Activated CD4-positive, alpha-beta memory T cell treated with anti-CD3 and anti-CD28 coated beads, Interleukin-2, amount 10 ng/mL, durations not matched to agents 7 days and 5 days (primary cell): ENCODE measurements at regions of chr6 and their contacts with region 1.

Region 1: GRCh38 chr6:30616811-30617564 is at the start of gene PPP1R10:
- DNase-seq: peak; percentile 99
- H3K4me3 Mint-ChIP-seq: peak within 1 kb of the TSS; percentile 91
- H3K27ac Mint-ChIP-seq: peak within 1 kb of the TSS; percentile 96
- H3K4me1 Mint-ChIP-seq: peaks cover 45% of the 10 kb centered on the region
- H3K27me3 Mint-ChIP-seq: no peaks in the 10 kb centered on the region
- total RNA-seq, gene PPP1R10: 96.1 to 103 TPM

Region 2: GRCh38 chr6:30212865-30213666 is 403.9 kb before region 1 on chr6 and contains the start of gene TRIM26:
- CTCF ChIA-PET with region 1: no interaction called
- POLR2A ChIA-PET with region 1: interaction called, 10 read pairs
- DNase-seq: peak; percentile 99
- H3K4me3 Mint-ChIP-seq: peak within 1 kb of the TSS; percentile 79
- H3K27ac Mint-ChIP-seq: peak within 1 kb of the TSS; percentile 99
- H3K4me1 Mint-ChIP-seq: peaks cover 56% of the 10 kb centered on the region
- H3K27me3 Mint-ChIP-seq: no peaks in the 10 kb centered on the region
- total RNA-seq, gene TRIM26: 91.1 to 91.5 TPM

Region 3: DNA sequence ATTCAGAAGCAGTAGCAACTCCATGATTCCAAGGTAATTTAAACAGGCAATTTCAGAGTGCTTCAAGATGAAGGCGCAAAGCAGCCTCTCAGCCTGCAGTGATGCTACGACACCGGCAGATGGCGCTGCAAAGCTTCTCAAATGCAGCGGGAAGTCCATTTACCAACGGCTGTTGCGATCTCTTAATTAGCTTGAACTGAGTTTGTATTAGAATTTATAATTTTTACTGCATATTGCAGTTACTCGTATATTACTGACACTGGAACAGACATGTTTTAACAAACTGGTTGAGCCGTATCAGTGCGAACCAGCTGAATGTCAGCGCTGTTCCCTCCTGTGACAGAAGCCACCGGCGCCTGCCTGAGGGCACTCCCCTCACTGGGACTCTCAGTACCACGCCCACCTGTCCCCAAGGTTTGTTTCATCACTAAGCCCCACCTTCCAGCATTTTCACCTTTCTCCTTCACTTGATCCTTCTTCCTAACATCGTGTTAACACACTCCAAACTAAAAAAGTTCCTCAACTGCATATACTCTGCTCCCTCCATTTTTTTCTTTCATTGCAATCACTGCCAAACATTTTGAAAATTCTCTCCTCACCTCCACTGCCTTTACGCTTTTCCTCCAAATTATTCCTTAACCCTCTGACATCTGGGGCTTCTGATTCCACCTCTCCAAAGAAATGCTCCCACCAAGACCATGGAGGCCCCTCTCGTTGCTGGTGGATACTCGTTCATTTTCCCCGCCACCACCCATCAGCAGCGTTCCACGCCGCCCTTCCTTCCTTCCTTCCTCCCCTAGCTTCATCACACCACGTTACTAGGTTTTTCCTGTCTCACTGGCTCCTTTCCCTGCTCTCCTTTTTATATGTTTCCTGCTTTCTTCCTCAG is 75.2 kb before region 1 on chr6:
- CTCF ChIA-PET with region 1: interaction called, 17 read pairs
- POLR2A ChIA-PET with region 1: interaction called, 11 read pairs
- DNase-seq: peak; percentile 83
- H3K4me3 Mint-ChIP-seq: peak overlapping the region; percentile 75
- H3K27ac Mint-ChIP-seq: peak overlapping the region; percentile 77
- H3K4me1 Mint-ChIP-seq: peaks cover 34% of the 10 kb centered on the region
- H3K27me3 Mint-ChIP-seq: no peaks in the 10 kb centered on the region

Region 4: DNA sequence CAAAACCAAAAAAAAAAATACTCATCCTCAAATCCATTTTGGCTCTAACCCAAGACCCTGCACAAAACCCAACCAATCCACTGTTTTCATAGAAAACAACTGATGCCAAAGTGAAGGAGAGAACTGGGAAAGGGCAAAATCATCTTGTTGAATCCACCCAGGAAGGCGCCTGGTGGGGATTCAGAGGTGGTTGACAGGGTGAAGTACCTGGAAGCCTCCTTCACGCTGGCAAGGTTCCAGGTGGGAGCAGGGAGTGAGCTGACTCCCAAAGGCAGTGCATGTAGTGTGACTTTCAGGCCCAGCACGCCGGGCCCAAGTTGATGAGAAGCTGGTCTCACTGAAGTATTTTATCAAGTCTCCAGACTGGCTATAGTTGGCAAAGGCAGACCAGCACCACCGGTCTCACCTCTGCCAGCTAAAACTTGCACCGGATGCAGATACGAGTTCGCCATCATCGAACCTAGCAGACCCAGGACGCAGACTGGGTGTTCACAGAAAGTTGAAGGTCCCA is 16.5 kb before region 1 on chr6:
- CTCF ChIA-PET with region 1: interaction called, 23 read pairs
- POLR2A ChIA-PET with region 1: interaction called, 97 read pairs
- DNase-seq: no peak
- H3K4me3 Mint-ChIP-seq: no peak overlapping the region
- H3K27ac Mint-ChIP-seq: no peak overlapping the region
- H3K4me1 Mint-ChIP-seq: peaks cover 22% of the 10 kb centered on the region
- H3K27me3 Mint-ChIP-seq: no peaks in the 10 kb centered on the region

Region 5: DNA sequence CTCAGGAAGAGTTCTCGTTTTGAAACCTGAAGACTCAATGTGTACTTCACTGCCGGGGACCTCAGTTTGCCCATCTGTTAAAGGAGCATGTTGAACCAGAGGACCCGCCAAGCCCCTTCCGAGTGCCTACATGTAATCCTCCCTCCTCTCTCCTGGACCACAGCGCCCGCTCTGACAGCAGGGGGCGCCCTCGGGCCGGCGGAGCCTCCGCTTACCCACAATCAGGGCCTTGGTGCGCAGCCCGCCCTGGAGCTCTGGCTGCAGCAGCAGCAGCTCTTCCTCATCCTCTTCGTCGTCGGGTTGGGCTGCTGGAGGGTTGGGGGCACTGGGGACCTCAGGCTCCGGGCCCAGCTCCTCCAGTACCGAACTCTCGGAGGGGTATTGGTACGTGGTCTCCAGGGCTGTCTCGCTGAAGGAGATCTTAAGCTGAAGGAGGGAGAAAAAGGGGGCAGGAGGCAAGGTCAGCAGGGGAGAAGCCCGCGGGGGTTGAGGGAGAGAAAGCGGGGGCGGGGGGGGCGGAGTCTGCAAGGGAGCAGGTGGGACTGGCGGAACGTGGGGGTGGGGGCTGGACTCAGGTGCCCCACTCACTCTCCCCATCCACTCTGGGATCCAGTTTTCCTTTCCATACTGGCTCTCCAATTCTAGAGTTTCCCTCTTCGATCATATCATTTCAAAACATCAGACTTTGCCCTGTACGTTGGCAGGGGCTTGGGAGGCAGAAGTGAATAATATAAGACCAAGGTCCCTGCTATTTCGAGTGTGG is 62.2 kb after region 1 on chr6:
- CTCF ChIA-PET with region 1: interaction called, 11 read pairs
- POLR2A ChIA-PET with region 1: interaction called, 65 read pairs
- DNase-seq: peak; percentile 93
- H3K4me3 Mint-ChIP-seq: peak overlapping the region; percentile 93
- H3K27ac Mint-ChIP-seq: peak overlapping the region; percentile 95
- H3K4me1 Mint-ChIP-seq: peaks cover 35% of the 10 kb centered on the region
- H3K27me3 Mint-ChIP-seq: no peaks in the 10 kb centered on the region

Region 6: DNA sequence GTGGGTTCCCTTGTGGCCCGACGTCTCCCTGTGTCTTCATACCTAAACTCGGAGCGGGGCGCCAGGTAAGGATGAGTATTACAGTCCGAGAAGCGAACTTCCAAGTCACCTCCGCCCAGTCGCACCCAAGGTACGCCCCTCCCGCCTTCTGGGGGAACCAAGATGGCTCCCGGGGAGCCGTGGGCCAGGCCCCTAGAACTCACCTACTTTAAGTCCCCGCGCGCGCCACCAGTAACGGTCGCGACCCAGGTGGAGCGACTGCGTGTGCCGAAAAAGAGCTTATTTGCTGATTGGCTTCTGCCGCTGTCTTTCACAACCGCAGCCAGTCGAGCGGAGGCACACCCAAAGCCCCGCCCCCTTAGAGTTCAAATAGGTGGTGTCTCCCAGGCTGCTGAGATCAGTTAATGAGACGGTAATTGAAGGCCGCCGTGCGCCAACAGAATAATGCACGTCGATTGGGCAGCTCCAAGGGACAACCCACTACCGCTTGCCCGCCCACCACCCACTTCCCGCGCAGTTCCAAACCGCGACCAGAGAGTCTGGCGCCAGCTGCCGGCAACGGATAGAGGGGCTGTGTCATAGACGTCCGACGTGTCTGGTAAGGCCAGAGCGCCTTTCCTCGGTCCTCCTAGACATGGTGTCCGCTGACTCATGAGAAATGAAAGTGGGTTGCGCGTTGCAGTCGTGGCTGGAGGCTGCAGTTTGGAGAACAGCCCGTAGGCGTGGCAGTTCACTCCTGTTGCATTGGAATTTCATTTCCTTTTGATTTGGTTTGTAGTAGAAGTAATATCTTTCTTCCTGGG is 100.3 kb after region 1 on chr6 and contains the start of gene MDC1:
- CTCF ChIA-PET with region 1: interaction called, 14 read pairs
- POLR2A ChIA-PET with region 1: interaction called, 87 read pairs
- DNase-seq: peak; percentile 100
- H3K4me3 Mint-ChIP-seq: peak within 1 kb of the TSS; percentile 84
- H3K27ac Mint-ChIP-seq: peak within 1 kb of the TSS; percentile 99
- H3K4me1 Mint-ChIP-seq: peaks cover 62% of the 10 kb centered on the region
- H3K27me3 Mint-ChIP-seq: no peaks in the 10 kb centered on the region
- total RNA-seq, gene MDC1: 49.7 to 54.6 TPM